ENCODE measurements at regions of chr12 and their contacts with region 1.

Region 1: DNA sequence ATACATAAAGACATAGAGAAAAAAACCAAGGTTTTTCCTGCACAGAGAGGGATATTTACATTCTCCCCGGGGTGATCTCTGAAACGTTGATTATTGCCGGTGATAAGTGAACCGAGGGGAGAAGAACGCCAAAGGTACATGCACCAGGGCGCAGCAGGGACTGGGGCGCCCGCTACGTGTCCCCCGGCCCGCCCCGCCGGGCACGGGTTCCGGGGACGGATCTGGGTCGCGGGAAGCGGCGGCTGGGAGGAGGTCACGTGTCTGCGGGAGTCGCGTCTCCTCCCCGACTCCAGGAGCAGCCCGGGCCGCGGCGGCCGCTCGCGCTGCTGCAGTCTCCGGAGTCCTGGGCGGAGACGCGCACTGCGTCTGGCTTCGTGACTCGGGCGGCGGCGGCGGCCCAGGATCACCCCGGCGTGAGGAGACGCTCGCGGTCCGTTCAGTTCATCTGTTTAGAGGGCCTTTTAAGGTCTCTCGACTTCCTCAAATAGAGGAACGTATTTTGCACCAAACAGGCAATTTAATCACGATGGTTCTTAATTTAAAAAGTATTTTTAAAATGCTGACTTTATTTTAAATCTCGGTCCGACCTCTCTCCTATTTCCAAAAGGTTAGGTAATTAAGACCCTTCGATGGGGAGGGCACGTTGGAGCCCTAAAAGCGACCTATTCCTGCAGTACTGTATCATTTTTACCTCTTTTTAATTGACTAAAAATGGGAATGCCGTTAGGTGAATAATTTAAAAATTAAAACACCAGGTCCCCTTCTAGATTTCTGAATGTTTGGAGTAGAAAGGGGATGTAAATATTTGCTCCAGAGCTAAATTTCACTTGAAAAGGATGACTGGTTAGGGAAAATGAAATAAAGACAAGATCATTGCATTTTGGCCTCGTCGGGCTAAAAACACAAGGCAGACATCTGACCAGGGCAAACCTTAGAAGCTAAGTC is 1.8 kb upstream of the BHLHE41 start:
- DNase-seq: peak; percentile 77
- H3K4me3 Mint-ChIP-seq: peak overlapping the region; percentile 94
- H3K27ac Mint-ChIP-seq: peak overlapping the region; percentile 63
- H3K4me1 Mint-ChIP-seq: peaks cover 24% of the 10 kb centered on the region
- H3K27me3 Mint-ChIP-seq: peaks cover 10% of the 10 kb centered on the region
- CTCF ChIP-seq: no peak

Region 2: GRCh38 chr12:25958428-25959070 is 168.1 kb before region 1 on chr12 and contains the start of gene RASSF8:
- CTCF ChIA-PET with region 1: no interaction called
- POLR2A ChIA-PET with region 1: interaction called, 3 read pairs
- intact Hi-C with region 1: loop called (anchors 5 kb)
- DNase-seq: peak; percentile 72
- H3K4me3 Mint-ChIP-seq: peak within 1 kb of the TSS; percentile 81
- H3K27ac Mint-ChIP-seq: peak within 1 kb of the TSS; percentile 71
- H3K4me1 Mint-ChIP-seq: peaks cover 27% of the 10 kb centered on the region
- H3K27me3 Mint-ChIP-seq: no peaks in the 10 kb centered on the region
- CTCF ChIP-seq: no peak
- total RNA-seq, gene RASSF8: 52.9 and 70.1 TPM in 2 replicates

Region 3: GRCh38 chr12:26172539-26172938 is 45.9 kb after region 1 on chr12:
- CTCF ChIA-PET with region 1: no interaction called
- POLR2A ChIA-PET with region 1: no interaction called
- intact Hi-C with region 1: no loop called
- DNase-seq: no peak
- H3K4me3 Mint-ChIP-seq: no peak overlapping the region
- H3K27ac Mint-ChIP-seq: no peak overlapping the region
- H3K4me1 Mint-ChIP-seq: no peaks in the 10 kb centered on the region
- H3K27me3 Mint-ChIP-seq: peaks cover 10% of the 10 kb centered on the region
- CTCF ChIP-seq: no peak

Region 4: GRCh38 chr12:26188127-26188526 is 61.5 kb after region 1 on chr12:
- CTCF ChIA-PET with region 1: interaction called, 5 read pairs
- POLR2A ChIA-PET with region 1: interaction called, 7 read pairs
- intact Hi-C with region 1: loop called (anchors 5 kb)
- DNase-seq: peak; percentile 19
- H3K4me3 Mint-ChIP-seq: no peak overlapping the region
- H3K27ac Mint-ChIP-seq: no peak overlapping the region
- H3K4me1 Mint-ChIP-seq: peaks cover 29% of the 10 kb centered on the region
- H3K27me3 Mint-ChIP-seq: no peaks in the 10 kb centered on the region
- CTCF ChIP-seq: no peak

Region 5: GRCh38 chr12:26318661-26319068 is 192.1 kb after region 1 on chr12:
- CTCF ChIA-PET with region 1: no interaction called
- POLR2A ChIA-PET with region 1: interaction called, 72 read pairs
- intact Hi-C with region 1: loop called (anchors 1 kb)
- DNase-seq: peak; percentile 88
- H3K4me3 Mint-ChIP-seq: peak overlapping the region; percentile 53
- H3K27ac Mint-ChIP-seq: peak overlapping the region; percentile 89
- H3K4me1 Mint-ChIP-seq: peaks cover 32% of the 10 kb centered on the region
- H3K27me3 Mint-ChIP-seq: no peaks in the 10 kb centered on the region
- CTCF ChIP-seq: no peak

Region 6: DNA sequence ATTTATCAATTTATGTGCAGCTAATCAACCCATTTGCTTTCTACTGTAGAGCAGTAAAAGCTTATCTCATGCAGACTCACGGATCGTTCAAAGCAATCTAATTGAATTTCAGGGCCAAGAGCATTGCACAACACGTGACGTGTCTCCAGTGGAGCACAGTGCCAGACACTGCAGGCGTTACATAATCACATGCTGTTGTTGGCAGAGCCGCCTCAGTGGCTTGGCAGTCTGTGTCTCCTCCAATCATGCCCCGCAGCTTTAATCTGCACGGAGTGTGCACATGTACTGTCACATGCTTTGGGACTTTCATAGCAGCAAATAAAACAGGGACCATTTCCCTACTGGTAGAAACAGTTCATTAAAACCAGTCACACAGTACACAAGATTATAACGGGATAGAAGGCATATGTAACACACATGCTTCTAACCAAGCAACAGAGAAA is 397.1 kb after region 1 on chr12:
- CTCF ChIA-PET with region 1: no interaction called
- POLR2A ChIA-PET with region 1: interaction called, 7 read pairs
- intact Hi-C with region 1: loop called (anchors 2 kb)
- DNase-seq: peak; percentile 98
- H3K4me3 Mint-ChIP-seq: peak overlapping the region; percentile 11
- H3K27ac Mint-ChIP-seq: no peak overlapping the region
- H3K4me1 Mint-ChIP-seq: peaks cover 12% of the 10 kb centered on the region
- H3K27me3 Mint-ChIP-seq: no peaks in the 10 kb centered on the region
- CTCF ChIP-seq: no peak

Region 7: DNA sequence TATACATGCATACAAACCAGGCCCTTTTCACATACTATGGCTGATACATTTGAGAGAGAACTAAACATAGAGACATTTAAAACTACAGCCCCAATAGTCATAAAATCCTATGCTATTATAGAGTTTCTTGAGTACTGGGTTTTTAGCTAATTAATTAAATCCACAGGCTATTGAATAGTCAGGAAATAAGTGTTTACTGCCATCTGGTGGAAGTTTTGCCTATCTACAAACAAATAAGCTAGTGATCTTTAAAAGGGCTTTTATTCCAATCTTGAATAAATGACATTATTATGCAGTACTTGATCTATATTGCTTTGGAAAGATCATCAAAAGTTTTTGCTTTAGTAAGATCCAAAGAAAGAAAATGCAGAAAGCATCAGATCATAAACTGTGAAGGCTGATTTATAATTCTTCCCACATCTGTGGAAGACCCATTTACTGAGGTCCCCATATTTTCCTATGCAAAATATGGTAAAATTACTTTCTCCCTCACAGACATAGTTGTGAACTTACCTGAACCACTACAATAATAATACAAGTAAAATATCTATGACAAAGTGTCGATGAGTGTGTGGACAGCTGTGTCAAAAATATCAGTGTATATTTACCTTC is 575.1 kb after region 1 on chr12:
- CTCF ChIA-PET with region 1: no interaction called
- POLR2A ChIA-PET with region 1: no interaction called
- intact Hi-C with region 1: loop called (anchors 5 kb)
- DNase-seq: peak; percentile 65
- H3K4me3 Mint-ChIP-seq: no peak overlapping the region
- H3K27ac Mint-ChIP-seq: no peak overlapping the region
- H3K4me1 Mint-ChIP-seq: peaks cover 13% of the 10 kb centered on the region
- H3K27me3 Mint-ChIP-seq: no peaks in the 10 kb centered on the region
- CTCF ChIP-seq: peak; percentile 66